Activated CD8-positive, alpha-beta memory T cell treated with anti-CD3 and anti-CD28 coated beads, Interleukin-2, amount 10 ng/mL, durations not matched to agents 7 days and 5 days (primary cell): ENCODE measurements at regions of chr1 and their contacts with region 1.

Region 1: GRCh38 chr1:204207136-204207616 is 6.6 kb downstream of the GOLT1A start:
- DNase-seq: peak; percentile 75
- ATAC-seq: peak; percentile 95
- H3K4me3 Mint-ChIP-seq: no peak overlapping the region
- H3K27ac Mint-ChIP-seq: no peak overlapping the region
- H3K4me1 Mint-ChIP-seq: no peaks in the 10 kb centered on the region
- H3K27me3 Mint-ChIP-seq: peaks cover 58% of the 10 kb centered on the region

Region 2: GRCh38 chr1:203985044-203985443 is 222.1 kb before region 1 on chr1:
- CTCF ChIA-PET with region 1: no interaction called
- DNase-seq: no peak
- ATAC-seq: no peak
- H3K4me3 Mint-ChIP-seq: no peak overlapping the region
- H3K27ac Mint-ChIP-seq: no peak overlapping the region
- H3K4me1 Mint-ChIP-seq: no peaks in the 10 kb centered on the region
- H3K27me3 Mint-ChIP-seq: peaks cover 12% of the 10 kb centered on the region

Region 3: DNA sequence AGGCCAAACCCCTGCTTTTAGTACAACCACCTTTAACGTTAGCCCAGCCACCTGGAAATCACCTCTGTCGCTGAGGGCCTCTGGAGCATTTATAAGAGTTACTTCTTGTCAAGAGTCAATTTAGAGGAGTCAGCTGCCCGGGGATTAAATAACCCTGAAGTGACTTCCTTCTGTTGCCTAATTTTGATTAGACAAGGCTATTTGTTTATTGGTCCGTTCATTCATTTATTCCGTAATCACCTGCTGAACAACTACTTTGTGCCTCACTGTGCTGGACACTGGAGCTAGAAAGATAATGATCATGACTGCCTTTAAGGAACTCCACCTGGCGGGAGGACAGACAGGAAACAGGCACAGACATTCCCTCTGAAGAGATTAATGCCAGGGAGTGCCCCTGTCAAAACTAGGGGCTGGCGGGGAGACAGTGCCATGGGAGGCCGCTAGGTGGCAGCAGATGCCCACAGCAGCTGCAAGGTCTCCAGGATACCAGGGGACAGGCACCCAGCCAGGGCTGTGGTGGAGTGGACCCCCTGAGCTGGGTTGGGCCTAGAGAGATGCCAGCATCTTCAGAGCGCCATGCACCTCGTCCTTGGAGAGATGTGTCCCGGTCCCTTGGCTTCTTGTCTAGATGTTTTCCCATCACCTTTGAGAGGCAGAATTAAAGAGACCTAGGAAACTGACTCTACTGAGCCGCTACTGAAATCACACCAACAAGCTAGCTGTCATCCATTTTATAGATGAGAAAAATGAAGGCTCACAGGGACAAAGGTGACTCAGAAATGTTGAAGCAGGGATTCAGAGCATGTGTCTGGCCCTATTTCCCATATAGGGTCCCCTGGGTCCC is 44.7 kb before region 1 on chr1:
- CTCF ChIA-PET with region 1: interaction called, 28 read pairs
- DNase-seq: peak; percentile 80
- ATAC-seq: peak; percentile 88
- H3K4me3 Mint-ChIP-seq: no peak overlapping the region
- H3K27ac Mint-ChIP-seq: no peak overlapping the region
- H3K4me1 Mint-ChIP-seq: no peaks in the 10 kb centered on the region
- H3K27me3 Mint-ChIP-seq: peaks cover 3% of the 10 kb centered on the region

Region 4: GRCh38 chr1:204190212-204191211 is 16.7 kb before region 1 on chr1:
- CTCF ChIA-PET with region 1: interaction called, 14 read pairs
- DNase-seq: no peak
- ATAC-seq: no peak
- H3K4me3 Mint-ChIP-seq: no peak overlapping the region
- H3K27ac Mint-ChIP-seq: no peak overlapping the region
- H3K4me1 Mint-ChIP-seq: peaks cover 3% of the 10 kb centered on the region
- H3K27me3 Mint-ChIP-seq: peaks cover 60% of the 10 kb centered on the region

Region 5: GRCh38 chr1:204266504-204267034 is 59.4 kb after region 1 on chr1:
- CTCF ChIA-PET with region 1: no interaction called
- DNase-seq: no peak
- ATAC-seq: no peak
- H3K4me3 Mint-ChIP-seq: no peak overlapping the region
- H3K27ac Mint-ChIP-seq: no peak overlapping the region
- H3K4me1 Mint-ChIP-seq: no peaks in the 10 kb centered on the region
- H3K27me3 Mint-ChIP-seq: peaks cover 4% of the 10 kb centered on the region

Region 6: GRCh38 chr1:204344665-204345355 is 137.6 kb after region 1 on chr1:
- CTCF ChIA-PET with region 1: no interaction called
- DNase-seq: no peak
- ATAC-seq: no peak
- H3K4me3 Mint-ChIP-seq: no peak overlapping the region
- H3K27ac Mint-ChIP-seq: no peak overlapping the region
- H3K4me1 Mint-ChIP-seq: peaks cover 4% of the 10 kb centered on the region
- H3K27me3 Mint-ChIP-seq: peaks cover 19% of the 10 kb centered on the region